Prostate gland (tissue), 2 donors: ENCODE measurements at regions of chr1 and their contacts with region 1.

Region 1: GRCh38 chr1:113042285-113043143 is 30.5 kb upstream of the LRIG2 start:
- DNase-seq: peak; percentile 69
- H3K4me3 ChIP-seq: no peak overlapping the region
- H3K27ac ChIP-seq: no peak overlapping the region
- H3K4me1 ChIP-seq: no peaks in the 10 kb centered on the region
- H3K27me3 ChIP-seq: no peaks in the 10 kb centered on the region
- CTCF ChIP-seq: peak in 3 of 4 experiments; percentile 55 to 65 (median 61)
- POLR2A ChIP-seq: no peak

Region 2: DNA sequence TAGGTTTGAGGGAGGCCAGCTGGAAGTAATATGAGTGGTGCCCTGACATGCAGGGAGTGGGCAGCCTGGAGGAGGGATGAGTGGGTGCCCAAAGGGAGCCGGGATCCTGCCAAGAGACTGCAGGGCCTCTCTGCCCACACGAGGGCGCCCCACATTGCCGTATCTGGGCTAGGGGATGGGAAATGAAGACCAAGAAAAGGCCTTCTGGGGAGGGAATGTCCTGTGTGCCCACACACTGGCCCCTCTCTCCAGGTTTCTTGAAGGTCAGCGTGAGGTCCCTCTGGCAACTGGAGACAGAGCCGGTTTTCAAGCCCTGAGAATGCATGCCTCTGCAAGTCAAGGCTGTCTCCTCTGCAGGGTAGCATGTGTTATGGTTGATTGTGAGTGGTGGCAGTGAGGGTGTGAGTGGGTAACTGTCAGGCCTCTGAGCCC is 233.2 kb before region 1 on chr1:
- intact Hi-C with region 1: loop called (anchors 5 kb)
- DNase-seq: peak; percentile 57
- H3K4me3 ChIP-seq: no peak overlapping the region
- H3K27ac ChIP-seq: no peak overlapping the region
- H3K4me1 ChIP-seq: no peaks in the 10 kb centered on the region
- H3K27me3 ChIP-seq: no peaks in the 10 kb centered on the region
- CTCF ChIP-seq: peak; percentile 29 to 70 (median 65)
- POLR2A ChIP-seq: no peak

Region 3: DNA sequence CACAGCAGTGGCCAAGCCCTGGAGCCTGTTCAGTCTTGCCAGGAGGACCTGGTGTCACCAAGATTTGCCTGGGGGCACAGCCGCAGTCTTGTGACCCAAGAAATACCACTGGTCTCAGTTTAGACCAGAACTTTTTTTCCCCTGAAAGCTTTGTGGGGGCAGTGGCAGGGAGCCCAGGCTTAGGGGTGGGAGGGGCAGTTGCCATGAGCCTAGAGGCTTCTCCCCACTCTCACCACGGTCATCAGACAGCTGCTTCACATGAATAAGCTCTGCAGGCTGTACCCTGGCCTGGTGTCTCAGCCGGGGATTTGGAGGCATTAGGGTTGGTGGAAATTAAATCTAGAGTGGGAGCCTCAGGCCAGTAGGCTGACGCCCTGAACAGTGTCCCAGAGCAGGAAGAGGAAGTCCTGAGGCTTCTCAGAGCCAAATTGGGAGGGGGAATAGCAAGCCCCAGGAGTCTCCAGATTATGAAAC is 160.2 kb before region 1 on chr1:
- intact Hi-C with region 1: loop called (anchors 1 kb)
- DNase-seq: no peak
- H3K4me3 ChIP-seq: no peak overlapping the region
- H3K27ac ChIP-seq: peak overlapping the region in 1 of 2 donors; percentile 41
- H3K4me1 ChIP-seq: no peaks in the 10 kb centered on the region
- H3K27me3 ChIP-seq: no peaks in the 10 kb centered on the region
- CTCF ChIP-seq: no peak
- POLR2A ChIP-seq: no peak